ENCODE measurements at regions of chr2 and their contacts with region 1.

Region 1: DNA sequence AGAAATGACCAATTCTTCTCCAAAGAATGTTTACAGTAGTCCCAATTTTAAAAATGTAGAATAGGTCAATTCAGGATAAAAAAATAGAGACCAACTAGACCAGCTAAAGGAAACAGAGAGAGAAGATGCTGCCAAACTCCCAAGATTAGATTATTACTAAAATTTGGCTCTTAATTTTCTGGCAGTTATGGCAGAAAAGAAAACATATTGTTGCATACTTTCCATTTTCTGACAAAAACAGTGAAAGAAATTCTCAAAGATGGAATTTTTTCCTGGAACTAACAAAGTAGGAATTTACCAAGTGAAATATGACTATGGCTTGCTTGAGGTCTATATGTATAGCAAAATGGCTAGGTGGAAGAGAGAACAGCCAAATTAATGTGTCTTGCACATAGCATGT is 138.3 kb upstream of the STK17B start:
- DNase-seq: no peak

Region 2: DNA sequence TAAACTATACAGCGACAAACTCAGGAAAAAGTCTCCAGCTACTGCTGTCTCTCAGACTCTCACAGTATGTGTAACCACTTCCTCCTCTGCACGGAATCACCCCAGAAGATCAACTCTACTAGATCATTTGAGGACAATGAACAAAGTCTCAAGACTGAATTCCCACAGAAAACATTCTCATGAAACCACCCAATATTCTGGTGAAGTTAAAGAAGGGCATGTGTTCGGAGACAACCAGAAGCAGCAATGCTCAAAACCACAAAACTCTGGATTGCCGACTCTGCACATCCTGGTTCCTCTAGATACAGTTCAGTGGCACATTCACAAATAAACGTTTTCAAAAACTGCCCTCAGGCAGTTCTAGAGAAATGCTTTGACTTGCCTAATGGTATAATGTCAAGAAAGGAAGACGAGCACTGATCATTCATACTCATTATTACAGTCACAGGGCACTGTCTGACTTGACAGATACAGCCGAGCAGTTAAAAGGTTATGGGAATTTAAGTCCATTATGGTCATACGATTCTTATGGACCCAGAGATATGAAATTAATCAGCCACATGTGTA is 46.4 kb before region 1 on chr2:
- intact Hi-C with region 1: no loop called
- DNase-seq: peak in 5 of 42 donors; percentile 10 to 25 (median 20)

Region 3: GRCh38 chr2:196441527-196441926 is 131.8 kb after region 1 on chr2:
- intact Hi-C with region 1: loop called (anchors 10 kb)
- DNase-seq: no peak

Measured in head of caudate nucleus (tissue), 42 donors.